ENCODE measurements at regions of chr22 and their contacts with region 1.

Region 1: DNA sequence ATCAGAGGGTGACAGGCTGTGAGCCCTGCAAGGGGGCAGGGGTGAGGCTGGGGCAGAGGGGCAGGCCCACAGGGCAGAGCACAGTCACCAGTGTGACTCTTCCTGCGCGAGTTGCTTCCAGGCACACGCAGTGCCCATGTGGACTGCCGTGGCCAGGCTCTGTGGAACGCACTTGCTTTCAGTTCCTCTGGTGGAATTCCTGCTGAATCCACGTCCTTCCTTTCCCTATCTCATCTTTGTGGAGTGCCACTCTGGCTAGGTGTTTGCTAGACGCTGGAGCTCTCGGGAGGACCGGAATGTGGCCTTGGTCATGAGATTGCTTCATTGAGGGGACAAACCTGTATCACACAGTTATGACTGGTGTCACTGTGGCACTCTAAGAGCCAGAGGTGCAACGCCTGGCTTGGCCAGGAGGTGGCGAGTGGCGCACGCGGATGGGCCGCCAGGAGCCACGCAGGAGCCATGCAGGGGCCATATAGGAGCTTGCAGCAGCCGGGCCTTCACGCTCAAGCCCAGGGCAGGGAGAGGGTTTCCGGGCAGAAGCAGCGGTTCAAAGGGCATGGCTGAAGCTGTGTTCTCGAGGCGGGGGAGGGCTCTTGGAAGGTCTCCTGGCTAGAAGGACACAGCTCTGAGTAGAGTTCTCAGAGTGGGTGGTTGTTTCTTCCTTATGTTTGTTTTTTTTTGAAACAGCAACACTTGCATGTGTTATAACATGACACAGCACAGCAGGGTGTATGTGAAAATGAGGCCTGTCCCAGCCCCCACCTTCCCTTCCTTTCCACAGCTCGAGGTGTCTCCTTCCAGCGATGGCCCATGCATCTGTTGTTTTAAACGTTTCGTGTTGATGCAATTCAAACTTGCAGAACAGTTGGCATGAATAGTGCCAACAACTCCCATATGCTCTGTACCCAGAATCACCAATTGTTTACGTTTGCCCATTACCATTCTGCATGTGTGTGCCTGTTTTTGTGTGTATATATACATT is 36.2 kb downstream of the TBC1D22A start:
- DNase-seq: peak; percentile 85
- H3K4me3 Mint-ChIP-seq: no peak overlapping the region
- H3K27ac Mint-ChIP-seq: peak overlapping the region; percentile 4
- H3K4me1 Mint-ChIP-seq: peaks cover 21% of the 10 kb centered on the region
- H3K27me3 Mint-ChIP-seq: no peaks in the 10 kb centered on the region

Region 2: DNA sequence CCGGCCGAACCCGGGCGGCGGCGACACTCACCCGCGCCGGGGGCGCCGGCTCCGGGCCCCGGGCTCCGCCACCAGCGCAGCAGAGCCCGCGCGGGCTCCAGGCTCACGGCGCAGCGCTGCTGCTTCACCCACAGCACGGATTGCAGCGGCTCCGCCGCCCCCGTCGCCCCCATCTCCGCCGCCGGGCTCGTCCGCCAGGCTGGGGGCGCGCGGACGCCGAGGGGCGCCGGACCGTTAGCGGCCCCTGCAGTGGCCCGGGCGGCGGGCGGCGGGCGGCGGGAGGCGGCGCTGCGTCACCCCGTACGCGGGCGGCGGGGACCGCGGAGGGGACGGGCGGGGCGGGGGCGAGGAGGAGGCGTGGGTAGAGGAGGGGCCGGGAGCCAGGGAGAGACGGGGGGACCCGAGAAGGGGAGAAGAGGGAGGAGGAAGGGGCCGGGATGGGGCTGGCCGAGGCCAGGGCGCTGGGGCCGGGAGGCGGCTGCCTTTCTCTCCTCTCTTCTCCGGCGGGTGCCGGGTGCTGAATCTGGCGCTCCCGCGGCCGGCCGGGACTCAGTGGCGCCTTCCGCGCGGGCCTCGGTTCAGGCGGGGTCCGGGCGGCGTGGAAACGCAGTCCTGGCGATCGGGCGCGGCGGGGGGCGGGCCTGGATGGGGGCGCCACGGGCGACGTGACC is 60.5 kb before region 1 on chr22 and contains the start of gene CERK:
- CTCF ChIA-PET with region 1: interaction called, 26 read pairs
- POLR2A ChIA-PET with region 1: no interaction called
- intact Hi-C with region 1: no loop called
- DNase-seq: peak; percentile 72
- H3K4me3 Mint-ChIP-seq: peak within 1 kb of the TSS; percentile 96
- H3K27ac Mint-ChIP-seq: peak within 1 kb of the TSS; percentile 93
- H3K4me1 Mint-ChIP-seq: peaks cover 33% of the 10 kb centered on the region
- H3K27me3 Mint-ChIP-seq: no peaks in the 10 kb centered on the region
- total RNA-seq, gene CERK: 54.4 to 55.0 TPM

Region 3: DNA sequence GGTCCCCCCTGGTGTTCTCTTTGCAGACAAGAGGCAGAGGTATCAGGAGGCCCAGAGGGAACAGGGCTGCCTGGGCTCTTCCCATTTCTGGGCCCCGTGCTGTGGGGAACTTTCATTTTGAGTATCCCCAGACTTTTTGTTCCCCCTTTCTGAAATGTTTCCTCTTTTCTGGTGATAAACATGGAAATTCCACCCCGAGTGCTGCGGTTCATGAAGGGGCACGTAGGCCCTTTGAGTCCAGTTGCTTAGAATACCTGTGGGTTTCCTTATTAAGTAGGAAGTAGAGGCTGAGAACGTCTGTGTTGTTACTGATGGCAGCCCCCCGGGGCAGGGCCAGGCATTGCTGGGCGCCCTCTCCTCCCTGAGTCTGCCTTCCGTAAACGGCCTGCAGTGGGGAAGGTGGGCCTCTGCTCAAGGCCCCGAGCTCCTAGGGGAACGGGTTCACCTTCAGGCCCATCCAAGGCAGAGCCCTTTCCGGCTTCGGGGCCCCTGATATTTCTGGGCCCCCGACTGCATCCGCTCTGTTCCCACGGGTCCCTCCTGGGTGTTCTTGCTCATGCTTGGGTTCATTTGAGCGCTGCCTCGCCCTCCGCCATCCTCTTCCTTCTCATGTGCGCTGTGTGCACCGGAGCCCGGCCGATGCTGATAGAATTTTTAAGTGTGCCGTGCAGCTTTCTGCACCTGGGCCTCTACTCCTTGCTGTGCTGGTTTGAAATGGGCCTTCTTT is 24.2 kb before region 1 on chr22:
- CTCF ChIA-PET with region 1: interaction called, 28 read pairs
- POLR2A ChIA-PET with region 1: no interaction called
- intact Hi-C with region 1: no loop called
- DNase-seq: peak; percentile 53
- H3K4me3 Mint-ChIP-seq: peak overlapping the region; percentile 63
- H3K27ac Mint-ChIP-seq: peak overlapping the region; percentile 87
- H3K4me1 Mint-ChIP-seq: peaks cover 76% of the 10 kb centered on the region
- H3K27me3 Mint-ChIP-seq: no peaks in the 10 kb centered on the region

Region 4: DNA sequence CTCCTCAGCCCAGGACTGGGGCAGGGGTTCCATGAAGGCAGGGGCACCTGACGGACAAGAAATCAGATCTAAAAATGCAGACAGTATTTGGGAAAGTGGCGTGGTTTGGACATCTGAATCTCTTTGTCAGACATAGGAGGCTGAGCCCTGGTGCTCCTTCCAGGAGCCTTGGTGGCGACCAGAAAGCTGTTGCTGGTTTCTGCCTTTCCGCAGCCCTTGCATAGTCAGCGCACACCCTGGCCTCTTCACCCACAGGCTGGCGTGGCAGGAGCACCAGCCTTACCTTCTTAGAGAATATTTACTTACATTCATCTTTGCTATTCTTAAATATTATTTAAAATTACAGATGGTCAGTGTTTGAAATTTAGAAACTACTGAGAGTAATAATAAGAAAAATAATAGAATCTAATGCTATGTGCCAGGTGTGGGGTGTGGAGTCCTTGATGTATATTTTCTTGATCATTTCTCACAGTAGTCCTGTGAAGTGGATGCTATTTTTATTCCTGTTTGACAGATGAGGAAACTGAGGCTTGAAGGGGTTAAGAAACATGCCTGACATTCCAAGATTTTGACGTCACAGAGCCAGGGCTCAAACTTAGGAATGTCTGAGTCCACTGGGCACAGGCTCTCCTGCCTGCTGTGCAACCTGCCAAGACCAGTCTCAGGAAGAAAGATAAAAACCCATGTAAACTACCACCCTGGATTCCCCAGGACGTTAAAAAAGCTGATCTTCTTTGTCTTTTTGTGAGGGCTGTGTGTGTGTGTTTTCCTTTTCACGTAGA is 15.3 kb after region 1 on chr22:
- CTCF ChIA-PET with region 1: interaction called, 24 read pairs
- POLR2A ChIA-PET with region 1: no interaction called
- intact Hi-C with region 1: no loop called
- DNase-seq: no peak
- H3K4me3 Mint-ChIP-seq: no peak overlapping the region
- H3K27ac Mint-ChIP-seq: no peak overlapping the region
- H3K4me1 Mint-ChIP-seq: peaks cover 28% of the 10 kb centered on the region
- H3K27me3 Mint-ChIP-seq: no peaks in the 10 kb centered on the region

Region 5: GRCh38 chr22:47043835-47044721 is 245.4 kb after region 1 on chr22:
- CTCF ChIA-PET with region 1: no interaction called
- POLR2A ChIA-PET with region 1: no interaction called
- intact Hi-C with region 1: no loop called
- DNase-seq: no peak
- H3K4me3 Mint-ChIP-seq: no peak overlapping the region
- H3K27ac Mint-ChIP-seq: no peak overlapping the region
- H3K4me1 Mint-ChIP-seq: peaks cover 15% of the 10 kb centered on the region
- H3K27me3 Mint-ChIP-seq: no peaks in the 10 kb centered on the region